MCF 10A (cell line): ENCODE measurements at regions of chr17 and their contacts with region 1.

Region 1: GRCh38 chr17:6640536-6641373 is at the starts of genes KIAA0753 and TXNDC17:
- DNase-seq: peak; percentile 89
- H3K4me3 Mint-ChIP-seq: peak within 1 kb of the TSS; percentile 96
- H3K27ac Mint-ChIP-seq: peak within 1 kb of the TSS; percentile 96
- H3K4me1 Mint-ChIP-seq: peaks cover 27% of the 10 kb centered on the region
- H3K27me3 Mint-ChIP-seq: no peaks in the 10 kb centered on the region
- CTCF ChIP-seq: no peak
- total RNA-seq, gene KIAA0753: 22.8 and 25.3 TPM in 2 replicates
- total RNA-seq, gene TXNDC17: 137 and 146 TPM in 2 replicates

Region 2: GRCh38 chr17:6507535-6507934 is 133.2 kb before region 1 on chr17:
- CTCF ChIA-PET with region 1: no interaction called
- POLR2A ChIA-PET with region 1: interaction called, 13 read pairs
- intact Hi-C with region 1: no loop called
- DNase-seq: peak; percentile 95
- H3K4me3 Mint-ChIP-seq: peak overlapping the region; percentile 38
- H3K27ac Mint-ChIP-seq: peak overlapping the region; percentile 90
- H3K4me1 Mint-ChIP-seq: peaks cover 32% of the 10 kb centered on the region
- H3K27me3 Mint-ChIP-seq: no peaks in the 10 kb centered on the region
- CTCF ChIP-seq: no peak

Region 3: GRCh38 chr17:6548578-6549330 is 92.0 kb before region 1 on chr17:
- CTCF ChIA-PET with region 1: no interaction called
- POLR2A ChIA-PET with region 1: interaction called, 19 read pairs
- intact Hi-C with region 1: no loop called
- DNase-seq: no peak
- H3K4me3 Mint-ChIP-seq: no peak overlapping the region
- H3K27ac Mint-ChIP-seq: no peak overlapping the region
- H3K4me1 Mint-ChIP-seq: peaks cover 42% of the 10 kb centered on the region
- H3K27me3 Mint-ChIP-seq: no peaks in the 10 kb centered on the region
- CTCF ChIP-seq: no peak

Region 4: DNA sequence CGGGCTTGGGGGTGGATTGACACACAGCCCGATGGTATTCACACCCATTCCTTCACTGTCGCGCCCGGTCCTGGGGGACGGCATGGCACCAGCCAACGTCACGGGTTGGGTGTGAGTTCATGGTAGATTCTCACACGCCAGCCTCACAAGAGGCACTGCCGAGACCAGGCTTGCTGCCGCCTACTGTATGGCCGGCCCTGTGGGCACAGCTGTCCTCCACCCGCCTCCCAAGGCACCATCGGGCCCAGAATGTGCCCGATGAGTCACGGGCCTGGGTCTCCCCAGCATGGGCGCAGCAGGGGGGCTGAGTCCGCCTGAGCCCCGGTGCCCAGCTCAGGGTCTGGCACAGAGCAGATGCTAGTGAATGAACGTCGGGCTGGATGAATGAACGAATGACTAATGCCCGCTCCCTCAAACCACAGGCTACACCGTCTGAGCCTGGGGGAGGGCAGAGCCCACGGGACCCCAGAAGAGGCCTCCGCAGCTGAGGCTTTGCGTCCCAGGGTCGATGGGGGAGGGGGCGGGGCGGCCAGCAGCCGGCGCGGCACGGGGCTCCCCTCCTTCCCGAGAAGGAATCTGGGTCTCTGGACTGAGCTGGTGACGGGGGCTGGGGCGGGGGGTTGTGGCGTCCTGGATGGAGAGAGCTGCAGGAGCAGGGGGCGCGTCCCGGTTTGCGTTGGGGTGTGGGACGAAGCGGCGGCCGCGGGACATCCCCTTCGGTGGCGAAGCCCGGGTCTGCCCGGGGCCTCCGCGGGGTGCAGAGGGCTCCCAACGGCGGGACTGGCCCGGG is 85.2 kb before region 1 on chr17:
- CTCF ChIA-PET with region 1: no interaction called
- POLR2A ChIA-PET with region 1: interaction called, 19 read pairs
- intact Hi-C with region 1: loop called (anchors 2 kb)
- DNase-seq: peak; percentile 79
- H3K4me3 Mint-ChIP-seq: peak overlapping the region; percentile 80
- H3K27ac Mint-ChIP-seq: peak overlapping the region; percentile 79
- H3K4me1 Mint-ChIP-seq: peaks cover 45% of the 10 kb centered on the region
- H3K27me3 Mint-ChIP-seq: no peaks in the 10 kb centered on the region
- CTCF ChIP-seq: no peak

Region 5: GRCh38 chr17:6627019-6627418 is 13.7 kb before region 1 on chr17:
- CTCF ChIA-PET with region 1: no interaction called
- POLR2A ChIA-PET with region 1: interaction called, 25 read pairs
- intact Hi-C with region 1: no loop called
- DNase-seq: peak; percentile 14
- H3K4me3 Mint-ChIP-seq: no peak overlapping the region
- H3K27ac Mint-ChIP-seq: no peak overlapping the region
- H3K4me1 Mint-ChIP-seq: peaks cover 18% of the 10 kb centered on the region
- H3K27me3 Mint-ChIP-seq: no peaks in the 10 kb centered on the region
- CTCF ChIP-seq: no peak

Region 6: GRCh38 chr17:6651357-6651918 is 10.7 kb after region 1 on chr17 and contains the starts of genes C17orf100 and MED31:
- CTCF ChIA-PET with region 1: interaction called, 3 read pairs
- POLR2A ChIA-PET with region 1: interaction called, 57 read pairs
- intact Hi-C with region 1: no loop called
- DNase-seq: peak; percentile 91
- H3K4me3 Mint-ChIP-seq: peak within 1 kb of the TSS; percentile 87
- H3K27ac Mint-ChIP-seq: peak within 1 kb of the TSS; percentile 94
- H3K4me1 Mint-ChIP-seq: peaks cover 40% of the 10 kb centered on the region
- H3K27me3 Mint-ChIP-seq: peaks cover 6% of the 10 kb centered on the region
- CTCF ChIP-seq: no peak
- total RNA-seq, gene C17orf100: 1.4 and 1.7 TPM in 2 replicates
- total RNA-seq, gene MED31: 17.7 and 17.8 TPM in 2 replicates

Region 7: DNA sequence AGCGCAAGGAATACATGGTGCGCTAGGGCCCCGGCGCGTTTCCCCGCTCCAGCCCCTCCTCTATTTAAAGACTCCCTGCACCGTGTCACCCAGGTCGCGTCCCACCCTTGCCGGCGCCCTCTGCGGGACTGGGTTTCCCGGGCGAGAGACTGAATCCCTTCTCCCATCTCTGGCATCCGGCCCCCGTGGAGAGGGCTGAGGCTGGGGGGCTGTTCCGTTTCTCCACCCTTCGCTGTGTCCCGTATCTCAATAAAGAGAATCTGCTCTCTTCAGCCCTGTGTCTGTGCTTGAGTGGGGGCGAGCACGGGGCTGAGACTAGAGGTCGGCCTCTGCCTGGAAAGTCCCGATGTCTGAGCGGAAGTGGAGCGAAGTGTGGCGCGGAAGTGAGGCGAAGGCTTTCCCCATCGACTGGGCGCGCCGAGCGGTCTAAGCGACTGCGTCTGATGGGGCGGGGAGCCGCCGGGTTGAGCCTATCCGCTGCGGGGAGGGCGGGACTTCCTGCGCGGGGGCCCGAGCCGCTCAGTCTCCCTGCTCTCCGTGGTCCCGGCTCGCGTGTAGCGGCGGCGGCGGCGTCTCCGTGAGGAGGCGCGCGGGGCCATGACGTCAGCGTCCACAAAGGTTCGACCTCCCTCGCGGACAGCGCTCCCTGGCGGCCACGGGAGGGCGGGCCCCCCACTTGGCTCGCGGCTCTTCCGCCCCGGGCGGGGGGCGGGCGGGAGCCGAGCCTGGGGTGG is 373.7 kb after region 1 on chr17:
- CTCF ChIA-PET with region 1: interaction called, 5 read pairs
- POLR2A ChIA-PET with region 1: interaction called, 14 read pairs
- intact Hi-C with region 1: no loop called
- DNase-seq: peak; percentile 96
- H3K4me3 Mint-ChIP-seq: peak overlapping the region; percentile 96
- H3K27ac Mint-ChIP-seq: peak overlapping the region; percentile 99
- H3K4me1 Mint-ChIP-seq: peaks cover 15% of the 10 kb centered on the region
- H3K27me3 Mint-ChIP-seq: no peaks in the 10 kb centered on the region
- CTCF ChIP-seq: peak; percentile 55